Activated T-helper 1 cell treated with anti-CD3 and anti-CD28 coated beads, Interleukin-12 subunit alpha, Interleukin-12 subunit beta, Interleukin-2, Interleukin-4 antibody, amounts not matched to agents 30 ng/mL and 10 ng/mL and 1 ng/mL, durations not matched to agents 14 hours and 24 hours and 36 hours (primary cell): ENCODE measurements at regions of chr1 and their contacts with region 1.

Region 1: DNA sequence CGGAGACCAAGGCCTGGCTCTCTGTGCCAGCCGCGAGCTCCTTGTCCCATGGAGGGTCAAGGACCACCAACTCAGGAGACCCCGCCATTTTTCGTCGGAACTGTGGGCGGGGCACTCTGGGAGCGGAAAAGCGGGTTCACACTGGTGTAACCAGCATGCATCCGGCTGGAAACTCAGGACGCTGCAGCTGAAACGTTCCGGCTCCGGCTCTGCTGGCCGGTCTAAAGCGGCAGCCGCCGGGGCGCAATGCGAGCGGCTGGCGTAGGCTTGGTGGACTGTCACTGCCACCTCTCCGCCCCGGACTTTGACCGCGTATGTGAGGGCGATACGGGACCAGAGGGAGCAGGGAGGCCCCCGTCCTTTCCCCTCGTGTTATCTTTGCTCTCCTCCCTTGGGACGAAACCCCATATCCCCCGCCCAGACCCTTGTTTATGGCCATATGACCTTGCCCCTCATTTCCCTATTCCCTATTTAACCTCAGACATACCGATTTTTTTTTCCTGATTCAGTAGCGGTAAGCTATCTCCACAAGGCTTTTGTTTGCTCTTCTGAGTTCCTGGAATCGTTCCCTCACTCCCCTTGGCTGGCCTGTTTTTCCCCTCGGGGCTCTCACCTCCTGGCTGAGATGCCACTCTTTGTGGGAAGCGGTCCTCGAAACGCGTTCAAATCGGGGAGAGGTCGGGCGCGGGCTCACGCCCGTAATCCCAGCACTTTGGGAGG is at the starts of genes NSL1 and TATDN3:
- DNase-seq: peak; percentile 93
- H3K4me3 Mint-ChIP-seq: peak within 1 kb of the TSS; percentile 99
- H3K27ac Mint-ChIP-seq: peak within 1 kb of the TSS; percentile 98
- H3K4me1 Mint-ChIP-seq: peaks cover 30% of the 10 kb centered on the region
- H3K27me3 Mint-ChIP-seq: no peaks in the 10 kb centered on the region
- total RNA-seq, gene NSL1: 40.2 and 44.7 TPM in 2 replicates
- total RNA-seq, gene TATDN3: 14.4 and 18.5 TPM in 2 replicates

Region 2: DNA sequence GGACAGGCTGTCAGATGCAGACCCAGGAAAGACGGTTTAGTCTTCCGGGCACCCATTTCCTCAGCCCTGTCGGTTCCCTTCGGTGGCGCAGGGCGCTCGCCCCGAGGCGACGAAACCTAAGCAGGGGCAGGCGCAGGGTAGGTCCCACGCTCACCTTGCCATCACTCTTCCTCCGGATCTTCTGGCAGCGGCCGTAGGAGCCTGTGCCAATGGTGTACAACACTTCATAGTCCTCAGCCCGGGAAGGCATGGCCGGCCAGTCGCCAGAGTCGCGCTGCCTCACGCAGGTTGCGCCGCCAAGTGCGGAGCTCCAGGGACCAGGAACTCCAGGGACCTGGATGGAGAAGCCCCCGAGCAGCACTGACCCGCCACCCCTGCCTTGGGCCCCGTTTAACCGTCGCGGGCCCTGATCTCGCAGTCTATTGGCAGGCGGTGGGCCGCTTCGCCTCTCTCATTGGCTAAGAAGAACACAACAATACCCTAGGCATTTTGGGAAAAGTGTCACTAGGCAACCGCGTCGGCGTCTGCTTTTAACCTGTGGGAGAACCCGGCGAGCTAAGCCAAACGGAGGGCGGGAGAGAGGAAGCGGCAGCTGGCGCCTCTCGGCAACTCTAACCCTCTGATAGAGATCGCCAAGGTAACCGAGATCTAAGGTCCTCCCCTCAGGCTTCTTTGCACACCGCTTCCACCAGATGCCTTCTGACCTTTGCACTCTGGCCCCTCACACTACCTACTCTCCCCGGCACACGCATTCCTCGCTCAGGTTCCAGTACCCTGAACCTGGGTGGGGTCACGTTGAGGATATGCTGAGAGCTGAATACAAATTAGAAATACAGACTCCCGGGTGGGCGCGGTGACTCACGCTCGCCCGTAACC is 1116.4 kb before region 1 on chr1 and contains the start of gene NEK2:
- intact Hi-C with region 1: loop called (anchors 10 kb)
- DNase-seq: peak; percentile 87
- H3K4me3 Mint-ChIP-seq: peak within 1 kb of the TSS; percentile 95
- H3K27ac Mint-ChIP-seq: peak within 1 kb of the TSS; percentile 80
- H3K4me1 Mint-ChIP-seq: peaks cover 42% of the 10 kb centered on the region
- H3K27me3 Mint-ChIP-seq: no peaks in the 10 kb centered on the region
- total RNA-seq, gene NEK2: 13.9 and 18.9 TPM in 2 replicates

Region 3: DNA sequence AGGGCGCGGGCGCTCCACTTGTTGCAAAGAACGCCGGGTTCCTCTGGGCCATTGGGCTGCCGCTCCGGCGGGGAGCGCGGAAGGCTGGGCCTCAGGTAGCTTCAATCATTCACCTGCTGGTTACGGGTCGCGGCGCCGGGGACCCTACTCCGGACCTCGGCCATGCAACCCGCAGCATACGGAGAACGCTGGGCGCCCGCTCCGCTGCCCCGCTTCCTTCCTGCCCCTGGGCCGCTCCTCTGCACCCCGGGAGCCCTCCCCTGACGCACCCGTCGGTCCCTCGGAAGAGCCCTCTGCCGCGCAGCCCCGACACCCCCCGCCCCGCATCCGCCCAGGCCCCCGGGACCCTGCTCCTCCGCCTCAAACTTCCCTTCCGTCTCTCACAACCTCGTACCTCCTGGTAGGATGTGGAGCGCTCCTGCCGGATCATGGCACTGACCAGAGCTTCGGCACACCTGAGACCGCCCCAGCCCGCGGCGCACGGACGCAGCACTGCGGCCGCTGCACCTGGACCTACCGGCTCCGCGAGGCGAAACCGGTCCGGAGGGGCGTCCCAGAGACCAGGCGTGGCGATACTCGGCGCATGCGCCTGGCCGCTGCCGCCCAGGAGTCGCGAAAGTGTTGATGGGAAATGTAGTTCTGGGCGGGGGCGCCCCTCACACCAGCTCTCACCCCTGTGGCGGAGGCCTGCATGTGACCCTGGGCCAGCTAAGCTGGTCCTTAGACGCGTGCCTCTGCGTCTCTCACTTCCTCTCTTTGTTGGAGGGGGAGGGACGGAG is 377.3 kb before region 1 on chr1 and contains the start of gene PACC1:
- intact Hi-C with region 1: loop called (anchors 2 kb)
- DNase-seq: peak; percentile 88
- H3K4me3 Mint-ChIP-seq: peak within 1 kb of the TSS; percentile 100
- H3K27ac Mint-ChIP-seq: peak within 1 kb of the TSS; percentile 97
- H3K4me1 Mint-ChIP-seq: peaks cover 21% of the 10 kb centered on the region
- H3K27me3 Mint-ChIP-seq: peaks cover 6% of the 10 kb centered on the region
- total RNA-seq, gene PACC1: 17.6 and 19.8 TPM in 2 replicates

Region 4: DNA sequence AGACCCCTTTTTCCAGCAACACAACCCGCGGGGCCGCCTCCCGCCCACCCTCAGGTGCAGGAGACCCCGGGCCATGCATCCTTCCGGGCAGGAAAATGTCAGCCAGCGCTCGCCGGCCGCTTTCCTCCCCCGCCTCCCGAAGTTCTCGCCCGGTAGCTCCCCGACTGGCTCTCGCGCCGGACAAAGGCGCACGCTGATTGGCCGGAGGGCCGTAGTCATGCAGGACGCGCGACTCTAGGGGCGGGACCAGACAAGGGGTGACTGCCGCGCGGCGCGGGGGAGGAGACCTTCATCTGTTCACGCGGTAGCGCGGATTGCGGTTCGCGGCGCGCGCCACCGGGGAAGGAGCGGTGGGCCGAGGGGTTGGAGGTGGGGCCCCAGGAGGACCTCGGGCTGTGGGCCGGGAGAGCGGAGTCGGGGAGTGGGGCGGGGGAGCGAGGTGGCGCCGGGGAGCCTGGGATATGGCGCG is 66.2 kb after region 1 on chr1 and contains the start of gene FLVCR1:
- intact Hi-C with region 1: loop called (anchors 1 kb)
- DNase-seq: peak; percentile 96
- H3K4me3 Mint-ChIP-seq: peak within 1 kb of the TSS; percentile 53
- H3K27ac Mint-ChIP-seq: peak within 1 kb of the TSS; percentile 98
- H3K4me1 Mint-ChIP-seq: peaks cover 15% of the 10 kb centered on the region
- H3K27me3 Mint-ChIP-seq: peaks cover 2% of the 10 kb centered on the region
- total RNA-seq, gene FLVCR1: 18.5 and 18.7 TPM in 2 replicates

Region 5: GRCh38 chr1:212990276-212990675 is 198.4 kb after region 1 on chr1:
- intact Hi-C with region 1: loop called (anchors 2 kb)
- DNase-seq: no peak
- H3K4me3 Mint-ChIP-seq: no peak overlapping the region
- H3K27ac Mint-ChIP-seq: no peak overlapping the region
- H3K4me1 Mint-ChIP-seq: peaks cover under 1% of the 10 kb centered on the region
- H3K27me3 Mint-ChIP-seq: no peaks in the 10 kb centered on the region